Activated T-helper 2 cell treated with anti-CD3 and anti-CD28 coated beads, Interferon-gamma antibody, Interleukin-2, Interleukin-4, amounts not matched to agents 10 μg/mL and 5 μg/mL and 100 μg/mL, durations not matched to agents 14 hours and 24 hours and 36 hours (primary cell): ENCODE measurements at regions of chr21 and their contacts with region 1.

Region 1: DNA sequence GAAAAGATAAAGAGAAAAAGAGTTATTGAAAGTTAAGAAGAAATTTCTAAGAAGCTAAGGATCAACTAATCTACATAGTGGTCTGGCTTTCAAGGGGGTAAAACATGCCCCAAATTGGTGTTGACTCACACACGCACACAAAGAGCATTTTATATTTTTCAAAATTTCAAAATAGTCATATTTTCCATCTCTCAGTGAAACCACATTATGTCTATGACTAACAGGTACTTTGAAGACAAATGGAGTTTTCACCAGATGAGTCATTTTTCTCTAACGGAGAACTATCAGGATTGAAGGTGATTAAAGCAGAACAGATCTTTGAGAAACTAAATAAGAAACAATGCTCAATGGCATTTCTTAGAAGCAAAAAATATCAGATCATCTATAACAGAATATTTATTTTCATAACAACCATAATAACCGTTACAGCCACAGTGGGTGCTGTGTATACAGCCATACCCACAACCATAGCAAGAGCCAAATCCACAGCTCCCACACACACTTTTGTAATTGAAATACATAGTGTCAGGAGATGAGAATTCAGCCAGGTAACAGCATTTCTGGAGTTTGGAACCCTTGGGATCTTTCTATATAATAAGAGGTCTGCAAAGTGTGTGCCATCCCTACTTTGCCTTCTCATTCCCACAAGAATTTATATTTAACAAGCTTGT is at the start of gene KRTAP21-3:
- DNase-seq: no peak
- H3K4me3 Mint-ChIP-seq: no peak within 1 kb of the TSS
- H3K27ac Mint-ChIP-seq: peak within 1 kb of the TSS; percentile 86
- H3K4me1 Mint-ChIP-seq: peaks cover 36% of the 10 kb centered on the region
- H3K27me3 Mint-ChIP-seq: no peaks in the 10 kb centered on the region
- total RNA-seq, gene KRTAP21-3: not detected in 2 replicates

Region 2: GRCh38 chr21:29073222-29074006 is 1645.0 kb before region 1 on chr21 and contains the start of gene CCT8:
- intact Hi-C with region 1: loop called (anchors 5 kb)
- DNase-seq: peak; percentile 99
- H3K4me3 Mint-ChIP-seq: peak within 1 kb of the TSS; percentile 99
- H3K27ac Mint-ChIP-seq: peak within 1 kb of the TSS; percentile 98
- H3K4me1 Mint-ChIP-seq: peaks cover 43% of the 10 kb centered on the region
- H3K27me3 Mint-ChIP-seq: no peaks in the 10 kb centered on the region
- total RNA-seq, gene CCT8: 366 and 387 TPM in 2 replicates

Region 3: GRCh38 chr21:30563072-30563471 is 155.3 kb before region 1 on chr21:
- intact Hi-C with region 1: no loop called
- DNase-seq: no peak
- H3K4me3 Mint-ChIP-seq: no peak overlapping the region
- H3K27ac Mint-ChIP-seq: no peak overlapping the region
- H3K4me1 Mint-ChIP-seq: no peaks in the 10 kb centered on the region
- H3K27me3 Mint-ChIP-seq: no peaks in the 10 kb centered on the region

Region 4: GRCh38 chr21:31132574-31133242 is 414.3 kb after region 1 on chr21:
- intact Hi-C with region 1: loop called (anchors 2 kb)
- DNase-seq: peak; percentile 69
- H3K4me3 Mint-ChIP-seq: peak overlapping the region; percentile 70
- H3K27ac Mint-ChIP-seq: peak overlapping the region; percentile 98
- H3K4me1 Mint-ChIP-seq: peaks cover 72% of the 10 kb centered on the region
- H3K27me3 Mint-ChIP-seq: no peaks in the 10 kb centered on the region

Region 5: GRCh38 chr21:31198575-31198974 is 480.2 kb after region 1 on chr21:
- intact Hi-C with region 1: loop called (anchors 1 kb)
- DNase-seq: no peak
- H3K4me3 Mint-ChIP-seq: no peak overlapping the region
- H3K27ac Mint-ChIP-seq: no peak overlapping the region
- H3K4me1 Mint-ChIP-seq: peaks cover 39% of the 10 kb centered on the region
- H3K27me3 Mint-ChIP-seq: no peaks in the 10 kb centered on the region